ENCODE measurements at regions of chr1 and their contacts with region 1.

Region 1: GRCh38 chr1:215439549-215439948 is 127.6 kb upstream of the KCTD3 start:
- DNase-seq: no peak
- ATAC-seq: no peak
- H3K4me3 ChIP-seq: no peak overlapping the region
- H3K4me3 Mint-ChIP-seq: no peak overlapping the region
- H3K27ac ChIP-seq: no peak overlapping the region
- H3K27ac Mint-ChIP-seq: no peak overlapping the region
- H3K4me1 ChIP-seq: no peaks in the 10 kb centered on the region
- H3K4me1 Mint-ChIP-seq: no peaks in the 10 kb centered on the region
- H3K27me3 ChIP-seq: no peaks in the 10 kb centered on the region
- H3K27me3 Mint-ChIP-seq: no peaks in the 10 kb centered on the region
- CTCF ChIP-seq: no peak

Region 2: GRCh38 chr1:215128504-215128903 is 311.0 kb before region 1 on chr1:
- CTCF ChIA-PET with region 1: no interaction called
- POLR2A ChIA-PET with region 1: no interaction called
- intact Hi-C with region 1: loop called in 1 of 2 experiments (anchors 5 kb)
- DNase-seq: no peak
- ATAC-seq: no peak
- H3K4me3 ChIP-seq: no peak overlapping the region
- H3K4me3 Mint-ChIP-seq: no peak overlapping the region
- H3K27ac ChIP-seq: no peak overlapping the region
- H3K27ac Mint-ChIP-seq: no peak overlapping the region
- H3K4me1 ChIP-seq: no peaks in the 10 kb centered on the region
- H3K4me1 Mint-ChIP-seq: no peaks in the 10 kb centered on the region
- H3K27me3 ChIP-seq: no peaks in the 10 kb centered on the region
- H3K27me3 Mint-ChIP-seq: no peaks in the 10 kb centered on the region
- CTCF ChIP-seq: no peak

Region 3: DNA sequence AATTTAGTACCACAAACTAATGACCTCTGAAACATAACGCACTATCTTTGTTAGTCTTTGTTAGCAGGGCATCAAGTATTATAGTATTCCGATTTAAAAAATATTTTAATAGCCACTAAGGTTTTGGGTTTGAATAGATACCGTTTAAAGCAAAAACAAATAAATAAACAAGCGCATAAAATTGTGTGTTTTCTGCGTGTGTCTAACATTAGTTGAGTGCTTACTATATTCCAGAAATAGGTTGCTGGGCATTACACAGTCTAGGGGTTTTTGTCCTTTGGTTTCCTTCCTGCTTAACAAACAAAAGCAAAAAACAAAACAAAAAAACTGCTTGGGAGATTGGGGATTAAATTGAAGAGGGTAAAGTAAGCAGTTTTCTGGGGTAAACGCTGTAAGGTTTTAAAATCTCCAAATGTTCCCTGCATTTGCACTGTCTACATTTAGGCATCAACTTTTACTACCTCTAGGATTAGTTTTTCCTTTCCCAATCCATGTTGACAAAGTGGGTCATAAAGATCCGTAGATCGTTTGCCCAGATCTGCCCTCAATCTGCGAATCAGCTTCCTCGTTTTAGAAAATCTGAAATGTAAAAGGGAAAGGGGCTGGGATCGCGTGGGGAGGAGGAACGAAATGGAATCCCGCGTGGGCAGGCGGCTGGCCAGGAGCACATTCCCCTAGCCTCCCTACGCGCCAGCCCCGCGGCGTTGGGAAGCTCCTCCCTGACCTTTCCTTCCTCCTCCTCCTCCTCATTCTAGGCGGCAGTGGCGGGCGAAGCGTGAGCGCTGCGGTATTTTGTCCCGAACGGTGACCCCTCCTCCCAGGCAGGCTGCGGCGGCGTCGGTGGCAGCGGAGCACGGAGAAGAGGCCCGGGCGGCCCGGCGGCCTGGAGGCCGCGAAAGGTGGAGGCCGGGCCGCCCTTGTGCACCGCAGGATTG is 127.3 kb after region 1 on chr1 and contains the start of gene KCTD3:
- CTCF ChIA-PET with region 1: no interaction called
- POLR2A ChIA-PET with region 1: no interaction called
- intact Hi-C with region 1: no loop called
- DNase-seq: peak in 5 of 9 experiments; percentile 13 to 31 (median 17)
- ATAC-seq: peak; percentile 46
- H3K4me3 ChIP-seq: peak within 1 kb of the TSS; percentile 47 to 51
- H3K4me3 Mint-ChIP-seq: peak within 1 kb of the TSS; percentile 88
- H3K27ac ChIP-seq: no peak within 1 kb of the TSS
- H3K27ac Mint-ChIP-seq: peak within 1 kb of the TSS; percentile 71
- H3K4me1 ChIP-seq: no peaks in the 10 kb centered on the region
- H3K4me1 Mint-ChIP-seq: peaks cover 19% of the 10 kb centered on the region
- H3K27me3 ChIP-seq: peaks cover 0 to 2% of the 10 kb centered on the region in 2 experiments
- H3K27me3 Mint-ChIP-seq: peaks cover 12% of the 10 kb centered on the region
- CTCF ChIP-seq: no peak
- total RNA-seq, gene KCTD3: 0.72 to 0.92 TPM

Region 4: GRCh38 chr1:216020743-216021345 is 581.3 kb after region 1 on chr1:
- CTCF ChIA-PET with region 1: no interaction called
- POLR2A ChIA-PET with region 1: no interaction called
- intact Hi-C with region 1: no loop called
- DNase-seq: no peak
- ATAC-seq: no peak
- H3K4me3 ChIP-seq: no peak overlapping the region
- H3K4me3 Mint-ChIP-seq: no peak overlapping the region
- H3K27ac ChIP-seq: no peak overlapping the region
- H3K27ac Mint-ChIP-seq: no peak overlapping the region
- H3K4me1 ChIP-seq: no peaks in the 10 kb centered on the region
- H3K4me1 Mint-ChIP-seq: no peaks in the 10 kb centered on the region
- H3K27me3 ChIP-seq: no peaks in the 10 kb centered on the region
- H3K27me3 Mint-ChIP-seq: no peaks in the 10 kb centered on the region
- CTCF ChIP-seq: no peak

Measured in CD8-positive, alpha-beta T cell (primary cell).